ENCODE measurements at regions of chr3 and their contacts with region 1.

Region 1: GRCh38 chr3:51498876-51499738 is 708 bp downstream of the DCAF1 start:
- DNase-seq: peak; percentile 89
- H3K4me3 ChIP-seq: peak overlapping the region; percentile 67
- H3K27ac ChIP-seq: peak overlapping the region; percentile 94
- H3K4me1 ChIP-seq: no peaks in the 10 kb centered on the region
- H3K27me3 ChIP-seq: no peaks in the 10 kb centered on the region
- CTCF ChIP-seq: no peak

Region 2: DNA sequence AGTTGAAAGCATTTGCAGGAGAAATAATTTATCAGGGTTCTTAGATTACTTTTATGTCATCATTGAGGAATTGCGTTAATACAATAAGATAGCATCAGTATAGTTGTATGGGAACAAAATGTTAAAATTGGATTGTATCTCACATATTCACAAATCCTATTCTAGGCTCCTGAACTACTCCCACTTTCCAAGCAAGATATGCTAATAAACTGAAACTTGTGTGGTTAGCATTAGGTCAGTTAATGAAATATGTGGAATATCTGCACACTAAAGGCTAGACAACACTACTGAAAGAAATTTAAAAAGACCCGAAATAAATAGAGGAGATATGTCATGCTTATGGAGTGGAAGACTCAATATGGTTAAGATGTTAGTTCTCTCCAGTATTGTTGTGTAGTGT is 551.7 kb before region 1 on chr3:
- CTCF ChIA-PET with region 1: no interaction called
- POLR2A ChIA-PET with region 1: no interaction called
- intact Hi-C with region 1: no loop called
- DNase-seq: no peak
- H3K4me3 ChIP-seq: no peak overlapping the region
- H3K27ac ChIP-seq: no peak overlapping the region
- H3K4me1 ChIP-seq: no peaks in the 10 kb centered on the region
- H3K27me3 ChIP-seq: no peaks in the 10 kb centered on the region
- CTCF ChIP-seq: no peak

Region 3: DNA sequence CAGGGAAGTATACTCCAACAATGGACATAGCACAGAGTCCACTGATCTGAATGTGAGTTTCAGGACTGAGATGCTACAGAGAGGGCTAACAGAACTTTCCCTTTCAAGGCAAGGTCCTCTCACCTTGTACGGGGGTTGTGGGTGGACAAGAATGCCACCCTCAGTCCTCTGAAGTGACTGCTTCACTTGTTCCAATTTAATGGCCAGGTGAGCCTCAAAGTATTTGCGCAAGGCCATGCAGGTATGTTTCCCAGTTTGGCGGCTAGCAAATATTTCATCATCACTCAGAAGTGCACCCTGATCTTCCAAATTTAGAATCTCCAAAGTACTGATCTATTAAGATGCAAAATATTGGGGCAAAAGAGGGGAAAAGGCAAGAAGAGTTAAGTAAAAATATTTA is 70.0 kb before region 1 on chr3:
- CTCF ChIA-PET with region 1: no interaction called
- POLR2A ChIA-PET with region 1: interaction called, 22 read pairs
- intact Hi-C with region 1: no loop called
- DNase-seq: no peak
- H3K4me3 ChIP-seq: no peak overlapping the region
- H3K27ac ChIP-seq: no peak overlapping the region
- H3K4me1 ChIP-seq: no peaks in the 10 kb centered on the region
- H3K27me3 ChIP-seq: no peaks in the 10 kb centered on the region
- CTCF ChIP-seq: no peak

Region 4: DNA sequence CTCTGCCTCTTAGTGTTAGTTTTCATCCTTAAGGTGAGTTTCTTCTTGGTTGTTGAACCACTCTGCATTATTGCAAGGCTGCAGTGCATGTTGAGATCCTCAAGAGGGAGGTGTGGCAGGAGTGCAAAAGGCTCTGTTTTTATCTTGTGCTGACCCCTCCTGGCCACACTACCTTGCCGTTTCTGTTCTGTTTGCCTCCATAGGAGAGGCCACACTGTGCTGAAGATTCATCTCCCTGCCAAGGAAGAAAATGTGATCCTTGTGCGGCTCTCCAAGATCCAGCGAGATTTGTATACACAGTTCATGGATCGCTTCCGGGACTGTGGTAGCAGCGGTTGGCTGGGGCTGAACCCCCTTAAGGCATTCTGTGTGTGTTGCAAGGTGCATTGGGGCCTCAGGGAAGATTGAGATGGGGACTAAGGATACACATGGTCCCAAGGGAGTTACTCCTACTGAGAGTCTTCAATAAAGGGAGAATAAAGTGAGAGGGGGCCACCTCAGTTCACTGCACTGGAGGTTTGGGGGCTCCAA is 138.9 kb after region 1 on chr3:
- CTCF ChIA-PET with region 1: no interaction called
- POLR2A ChIA-PET with region 1: no interaction called
- intact Hi-C with region 1: loop called (anchors 2 kb)
- DNase-seq: peak; percentile 49
- H3K4me3 ChIP-seq: no peak overlapping the region
- H3K27ac ChIP-seq: no peak overlapping the region
- H3K4me1 ChIP-seq: no peaks in the 10 kb centered on the region
- H3K27me3 ChIP-seq: no peaks in the 10 kb centered on the region
- CTCF ChIP-seq: peak; percentile 64

Region 5: DNA sequence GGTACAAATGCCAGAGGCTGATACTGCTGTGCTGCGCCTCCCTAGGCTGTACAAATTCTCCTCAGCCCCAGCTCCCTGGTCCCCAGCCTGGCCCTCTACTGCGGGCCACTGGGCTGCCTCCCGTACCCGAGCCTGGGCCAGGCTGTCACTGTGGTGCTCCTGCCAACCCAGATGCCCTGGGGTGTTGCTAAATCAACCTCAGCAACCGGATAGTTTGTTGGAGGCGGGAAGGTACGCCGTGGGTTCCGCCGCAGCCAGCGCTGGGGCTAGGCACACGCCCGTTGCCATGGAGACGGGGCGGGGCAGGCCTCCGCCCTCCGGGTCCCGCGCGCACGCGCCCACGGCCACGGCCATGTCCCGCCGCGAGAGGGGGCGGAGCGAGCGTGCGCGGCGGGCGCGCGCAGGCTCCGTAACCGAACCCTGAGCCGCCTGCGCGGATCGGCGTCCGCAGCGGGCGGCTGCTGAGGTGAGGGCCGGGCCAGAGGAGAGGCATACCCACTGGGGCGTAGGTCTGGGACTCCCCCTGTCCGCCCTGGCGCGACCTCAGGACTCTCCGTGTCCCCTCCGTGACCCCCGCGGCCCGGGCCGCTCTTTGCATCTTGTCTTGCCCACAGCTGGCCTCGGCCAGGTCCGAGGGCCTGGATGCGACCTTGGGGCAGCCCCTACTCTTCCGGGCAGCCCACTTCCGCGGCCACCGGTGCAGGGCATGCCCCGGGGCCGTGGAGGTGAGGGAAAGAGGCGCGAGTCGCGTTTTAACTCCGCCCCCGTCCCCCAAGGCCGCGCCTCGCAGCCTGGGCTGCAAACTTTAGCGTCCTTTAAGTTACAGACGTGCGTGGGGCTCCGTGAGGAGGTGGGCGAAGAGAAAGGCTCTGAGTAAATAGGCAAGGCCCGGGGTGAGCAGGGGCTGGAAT is 172.0 kb after region 1 on chr3 and contains the start of gene TEX264:
- CTCF ChIA-PET with region 1: interaction called, 12 read pairs
- POLR2A ChIA-PET with region 1: no interaction called
- intact Hi-C with region 1: loop called (anchors 1 kb)
- DNase-seq: peak; percentile 80
- H3K4me3 ChIP-seq: peak within 1 kb of the TSS; percentile 84
- H3K27ac ChIP-seq: peak within 1 kb of the TSS; percentile 92
- H3K4me1 ChIP-seq: peaks cover 9% of the 10 kb centered on the region
- H3K27me3 ChIP-seq: no peaks in the 10 kb centered on the region
- CTCF ChIP-seq: no peak
- total RNA-seq, gene TEX264: 21.4 and 23.0 TPM in 2 replicates

Region 6: DNA sequence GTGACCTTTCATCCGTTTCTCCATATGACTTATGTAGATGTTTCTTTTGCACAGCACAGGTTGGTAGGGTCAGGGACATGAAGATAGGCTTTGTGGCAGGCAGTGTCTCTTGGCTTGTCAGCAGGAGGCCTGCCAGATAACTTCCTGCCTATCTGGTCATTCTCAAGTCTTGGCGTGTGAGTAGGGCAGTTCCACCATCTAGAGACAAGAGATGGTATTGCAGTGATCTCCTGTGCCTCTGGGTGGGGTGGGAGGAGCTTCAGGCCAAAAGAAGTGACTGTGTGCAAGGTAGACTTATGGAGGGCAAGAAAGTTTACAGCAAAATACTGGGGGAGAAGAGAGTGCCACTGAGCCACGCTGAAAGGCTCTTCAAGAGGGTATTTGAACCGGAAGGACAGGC is 183.0 kb after region 1 on chr3:
- CTCF ChIA-PET with region 1: interaction called, 22 read pairs
- POLR2A ChIA-PET with region 1: no interaction called
- intact Hi-C with region 1: loop called (anchors 1 kb)
- DNase-seq: peak; percentile 82
- H3K4me3 ChIP-seq: no peak overlapping the region
- H3K27ac ChIP-seq: no peak overlapping the region
- H3K4me1 ChIP-seq: peaks cover 3% of the 10 kb centered on the region
- H3K27me3 ChIP-seq: no peaks in the 10 kb centered on the region
- CTCF ChIP-seq: peak; percentile 62

Region 7: GRCh38 chr3:51799879-51800749 is 301.0 kb after region 1 on chr3:
- CTCF ChIA-PET with region 1: no interaction called
- POLR2A ChIA-PET with region 1: no interaction called
- intact Hi-C with region 1: loop called (anchors 10 kb)
- DNase-seq: peak; percentile 67
- H3K4me3 ChIP-seq: no peak overlapping the region
- H3K27ac ChIP-seq: no peak overlapping the region
- H3K4me1 ChIP-seq: no peaks in the 10 kb centered on the region
- H3K27me3 ChIP-seq: no peaks in the 10 kb centered on the region
- CTCF ChIP-seq: peak; percentile 65

Region 8: DNA sequence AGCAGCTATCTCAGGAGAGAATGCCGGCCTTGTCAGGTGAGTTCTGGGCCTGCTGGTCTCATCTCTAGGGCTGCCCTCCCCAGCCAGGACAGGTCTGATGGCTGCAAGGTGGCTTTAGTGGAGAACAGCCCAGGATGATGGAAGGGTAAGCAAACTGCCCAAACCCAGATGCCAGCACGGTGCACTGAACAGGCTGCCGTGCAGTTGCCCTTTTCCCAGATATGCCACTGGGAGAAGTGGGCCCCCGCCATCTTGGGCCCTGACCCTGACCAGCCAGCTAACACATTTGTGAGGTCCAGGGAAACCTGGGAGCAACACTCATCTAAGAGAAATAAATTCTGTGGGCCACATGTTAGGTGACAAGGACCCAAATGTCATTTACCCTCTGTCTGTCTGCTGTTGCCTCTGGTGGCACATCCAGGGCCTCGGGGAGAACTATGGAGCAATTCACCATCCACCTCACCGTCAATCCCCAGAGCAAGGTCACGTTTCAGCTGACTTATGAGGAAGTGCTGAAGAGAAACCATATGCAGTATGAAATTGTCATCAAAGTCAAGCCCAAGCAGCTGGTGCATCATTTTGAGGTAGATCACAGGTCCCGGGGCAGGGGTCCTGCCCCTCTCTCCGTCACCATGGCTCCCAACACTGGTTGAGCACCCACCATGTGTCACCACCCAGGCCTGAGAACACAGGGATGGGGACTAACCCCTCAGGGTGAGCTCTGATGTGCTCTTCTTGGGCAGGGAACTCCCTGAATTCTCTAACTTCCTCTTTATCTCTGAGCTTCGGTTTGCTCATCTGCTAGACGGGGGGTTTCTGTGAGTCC is 1280.1 kb after region 1 on chr3:
- CTCF ChIA-PET with region 1: no interaction called
- POLR2A ChIA-PET with region 1: no interaction called
- intact Hi-C with region 1: no loop called
- DNase-seq: no peak
- H3K4me3 ChIP-seq: no peak overlapping the region
- H3K27ac ChIP-seq: no peak overlapping the region
- H3K4me1 ChIP-seq: no peaks in the 10 kb centered on the region
- H3K27me3 ChIP-seq: no peaks in the 10 kb centered on the region
- CTCF ChIP-seq: no peak